Transverse colon (tissue), 4 donors: ENCODE measurements at regions of chr2 and their contacts with region 1.

Region 1: DNA sequence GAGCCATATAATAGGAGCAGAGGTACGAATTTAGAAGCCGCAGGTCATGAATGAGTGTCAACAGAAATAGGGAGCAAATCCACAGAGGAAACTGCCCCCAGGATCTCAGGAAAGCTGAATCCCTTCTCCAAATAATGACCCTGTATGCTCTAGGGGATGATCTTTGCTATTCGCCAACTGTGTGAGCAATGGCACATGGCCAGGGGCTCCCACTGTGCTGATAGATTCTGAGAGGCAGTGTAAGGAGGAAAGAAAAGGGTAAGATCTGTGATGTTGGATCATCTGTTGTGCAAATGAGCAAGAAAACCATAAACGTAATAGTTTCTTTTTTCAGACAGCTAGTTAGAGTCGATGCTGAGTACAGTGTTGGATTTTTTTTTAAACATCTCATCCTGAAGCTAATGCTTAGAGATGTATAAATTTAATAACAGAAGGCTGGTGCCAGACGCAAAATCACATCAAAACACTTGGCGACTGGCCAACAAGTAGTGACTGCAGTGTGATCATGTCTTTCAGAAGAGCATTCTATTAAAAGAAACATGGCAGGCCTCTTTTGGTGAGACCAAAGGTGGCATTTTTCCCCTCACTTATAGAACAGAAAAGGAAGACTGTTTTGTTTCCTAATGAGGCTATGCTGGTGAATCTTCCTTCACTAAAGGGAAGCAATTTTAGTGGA is 77.4 kb downstream of the ABCA12 start:
- DNase-seq: no peak
- H3K4me3 ChIP-seq: no peak overlapping the region
- H3K27ac ChIP-seq: no peak overlapping the region
- H3K4me1 ChIP-seq: no peaks in the 10 kb centered on the region
- H3K27me3 ChIP-seq: no peaks in the 10 kb centered on the region
- CTCF ChIP-seq: no peak
- EP300 ChIP-seq: no peak
- POLR2A ChIP-seq: no peak

Region 2: DNA sequence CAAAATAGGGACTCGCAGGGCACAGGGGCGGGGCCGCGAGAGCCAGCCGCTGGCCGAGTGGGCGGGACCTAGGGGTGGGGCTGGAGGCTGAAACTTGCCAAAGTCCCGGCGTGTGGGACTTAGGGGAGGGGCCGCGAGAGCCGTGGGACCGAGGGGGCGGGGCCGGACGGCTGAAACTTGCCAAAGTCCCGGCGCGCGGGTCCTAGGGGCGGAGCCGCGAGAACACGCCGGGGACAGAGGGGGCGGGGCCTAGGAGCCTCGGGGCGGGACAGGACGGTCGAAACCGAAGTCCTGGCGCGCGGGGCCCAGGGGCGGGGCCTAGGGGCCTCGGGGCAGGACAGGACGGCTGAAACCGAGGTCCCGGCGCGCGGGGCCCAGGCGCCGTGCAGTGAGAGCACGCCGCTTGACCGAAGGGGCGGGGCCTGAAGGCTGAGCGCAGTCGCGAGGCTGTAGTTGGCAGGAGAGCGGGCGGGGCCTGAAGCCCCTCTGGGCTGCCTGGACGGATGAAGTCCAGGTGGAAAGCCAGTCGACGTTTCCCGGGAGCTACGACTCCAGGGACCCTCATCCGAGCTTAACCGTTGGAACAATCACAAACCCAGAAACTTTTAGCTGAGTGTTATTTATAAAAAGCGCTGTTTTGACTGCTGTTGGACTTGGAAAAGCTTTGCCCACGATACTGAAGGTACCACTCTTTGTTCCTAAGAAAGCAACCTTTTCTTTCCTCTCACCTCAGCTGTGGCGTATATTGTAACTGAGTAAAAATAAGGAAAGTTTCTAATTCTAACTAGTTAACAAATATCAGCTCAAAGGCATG is 251.0 kb before region 1 on chr2:
- in situ Hi-C with region 1: no loop called
- intact Hi-C with region 1: no loop called
- DNase-seq: peak; percentile 100
- H3K4me3 ChIP-seq: peak overlapping the region; percentile 20 to 89 (median 79)
- H3K27ac ChIP-seq: peak overlapping the region; percentile 88 to 98 (median 96)
- H3K4me1 ChIP-seq: peaks cover 0 to 17% (median 12%) of the 10 kb centered on the region in 4 donors
- H3K27me3 ChIP-seq: no peaks in the 10 kb centered on the region
- CTCF ChIP-seq: no peak
- EP300 ChIP-seq: no peak
- POLR2A ChIP-seq: no peak

Region 3: GRCh38 chr2:215094341-215094740 is 33.3 kb after region 1 on chr2:
- in situ Hi-C with region 1: no loop called
- intact Hi-C with region 1: loop called (anchors 1 kb)
- DNase-seq: no peak
- H3K4me3 ChIP-seq: no peak overlapping the region
- H3K27ac ChIP-seq: no peak overlapping the region
- H3K4me1 ChIP-seq: no peaks in the 10 kb centered on the region
- H3K27me3 ChIP-seq: no peaks in the 10 kb centered on the region
- CTCF ChIP-seq: no peak
- EP300 ChIP-seq: no peak
- POLR2A ChIP-seq: no peak

Region 4: GRCh38 chr2:215356948-215357461 is 296.0 kb after region 1 on chr2:
- in situ Hi-C with region 1: no loop called
- intact Hi-C with region 1: no loop called
- DNase-seq: no peak
- H3K4me3 ChIP-seq: no peak overlapping the region
- H3K27ac ChIP-seq: no peak overlapping the region
- H3K4me1 ChIP-seq: no peaks in the 10 kb centered on the region
- H3K27me3 ChIP-seq: no peaks in the 10 kb centered on the region
- CTCF ChIP-seq: no peak
- EP300 ChIP-seq: no peak
- POLR2A ChIP-seq: no peak